Activated CD8-positive, alpha-beta T cell treated with anti-CD3 and anti-CD28 coated beads for 36 hours (primary cell): ENCODE measurements at regions of chr4 and their contacts with region 1.

Region 1: DNA sequence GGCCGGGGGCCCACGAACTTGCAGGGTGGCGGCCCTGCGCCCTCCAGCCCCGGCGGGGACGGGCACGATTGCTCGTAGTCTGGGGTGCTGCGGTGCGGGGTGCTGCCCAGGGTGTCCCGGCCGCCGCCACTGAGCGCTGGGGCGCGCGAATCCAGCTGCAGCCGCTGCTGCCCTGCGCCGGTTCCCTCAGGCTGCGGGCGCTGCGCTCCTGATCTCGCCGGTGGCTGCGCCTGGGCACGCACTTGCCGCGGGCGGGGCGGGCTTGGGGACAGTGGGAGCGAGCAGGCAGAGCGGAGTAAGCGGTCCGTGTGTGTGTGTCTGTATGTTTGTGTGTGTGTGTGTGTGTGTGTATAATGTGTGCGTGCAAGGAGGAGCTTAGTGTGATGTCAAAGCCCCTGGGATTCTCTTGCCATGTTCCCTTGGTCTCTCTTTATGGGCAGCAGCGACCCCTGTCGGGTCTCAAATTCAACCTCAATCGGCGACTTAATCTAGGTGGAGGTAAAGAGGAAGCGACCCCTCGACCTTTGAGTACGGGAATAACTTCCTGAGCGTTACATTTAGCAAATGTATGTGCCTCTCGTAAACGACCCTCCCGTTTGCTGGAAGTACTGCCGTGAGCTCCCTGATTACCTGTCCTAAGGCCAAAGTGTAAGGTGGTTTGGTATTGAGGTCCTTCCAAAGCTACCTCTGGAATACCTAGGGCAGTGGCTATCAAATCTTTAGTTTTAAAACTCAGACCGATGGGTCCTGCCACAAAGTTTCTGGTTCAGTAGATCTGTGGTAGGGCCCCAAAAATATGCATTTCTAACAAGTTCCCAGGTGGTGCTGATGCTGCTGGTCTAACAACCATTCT is at the start of gene RNF150:
- DNase-seq: peak; percentile 80
- ATAC-seq: peak; percentile 77
- H3K4me3 Mint-ChIP-seq: peak within 1 kb of the TSS; percentile 83
- H3K27ac Mint-ChIP-seq: no peak within 1 kb of the TSS
- H3K4me1 Mint-ChIP-seq: no peaks in the 10 kb centered on the region
- H3K27me3 Mint-ChIP-seq: peaks cover 66% of the 10 kb centered on the region
- CTCF ChIP-seq: no peak
- total RNA-seq, gene RNF150: 0.09 to 0.43 TPM

Region 2: GRCh38 chr4:140861359-140862176 is 271.8 kb before region 1 on chr4:
- CTCF ChIA-PET with region 1: interaction called, 11 read pairs
- POLR2A ChIA-PET with region 1: no interaction called
- intact Hi-C with region 1: loop called (anchors 1 kb)
- DNase-seq: peak; percentile 78
- ATAC-seq: no peak
- H3K4me3 Mint-ChIP-seq: no peak overlapping the region
- H3K27ac Mint-ChIP-seq: no peak overlapping the region
- H3K4me1 Mint-ChIP-seq: no peaks in the 10 kb centered on the region
- H3K27me3 Mint-ChIP-seq: peaks cover 11% of the 10 kb centered on the region
- CTCF ChIP-seq: peak; percentile 76

Region 3: GRCh38 chr4:141144207-141144606 is 10.8 kb after region 1 on chr4:
- CTCF ChIA-PET with region 1: interaction called, 10 read pairs
- POLR2A ChIA-PET with region 1: no interaction called
- intact Hi-C with region 1: no loop called
- DNase-seq: no peak
- ATAC-seq: no peak
- H3K4me3 Mint-ChIP-seq: no peak overlapping the region
- H3K27ac Mint-ChIP-seq: no peak overlapping the region
- H3K4me1 Mint-ChIP-seq: no peaks in the 10 kb centered on the region
- H3K27me3 Mint-ChIP-seq: peaks cover under 1% of the 10 kb centered on the region
- CTCF ChIP-seq: no peak